Ovary (tissue), 10 donors: ENCODE measurements at regions of chr6 and their contacts with region 1.

Region 1: GRCh38 chr6:116444092-116444491 is 17.1 kb upstream of the CALHM6 start:
- DNase-seq: no peak
- H3K4me3 ChIP-seq: no peak overlapping the region
- H3K27ac ChIP-seq: no peak overlapping the region
- H3K4me1 ChIP-seq: peaks cover 6% of the 10 kb centered on the region
- H3K27me3 ChIP-seq: no peaks in the 10 kb centered on the region
- CTCF ChIP-seq: peak in 2 of 3 donors; percentile 12 to 17
- EP300 ChIP-seq: no peak
- POLR2A ChIP-seq: no peak

Region 2: GRCh38 chr6:116387374-116387773 is 56.7 kb before region 1 on chr6:
- intact Hi-C with region 1: loop called in 1 of 4 experiments (anchors 10 kb)
- DNase-seq: no peak
- H3K4me3 ChIP-seq: no peak overlapping the region
- H3K27ac ChIP-seq: peak overlapping the region in 1 of 2 donors; percentile 0
- H3K4me1 ChIP-seq: peaks cover 14% of the 10 kb centered on the region
- H3K27me3 ChIP-seq: no peaks in the 10 kb centered on the region
- CTCF ChIP-seq: no peak
- EP300 ChIP-seq: no peak
- POLR2A ChIP-seq: no peak